SK-N-SH (cell line): ENCODE measurements at regions of chr9 and their contacts with region 1.

Region 1: GRCh38 chr9:5886114-5886939 is 4.4 kb upstream of the MLANA start:
- DNase-seq: peak; percentile 81
- H3K4me3 ChIP-seq: no peak overlapping the region; a peak in 1 of 4 replicates
- H3K27ac ChIP-seq: no peak overlapping the region
- H3K4me1 ChIP-seq: no peaks in the 10 kb centered on the region; a peak in 1 of 4 replicates
- H3K27me3 ChIP-seq: no peaks in the 10 kb centered on the region
- CTCF ChIP-seq: peak; percentile 96
- EP300 ChIP-seq: no peak
- RAD21 ChIP-seq: peak; percentile 96

Region 2: DNA sequence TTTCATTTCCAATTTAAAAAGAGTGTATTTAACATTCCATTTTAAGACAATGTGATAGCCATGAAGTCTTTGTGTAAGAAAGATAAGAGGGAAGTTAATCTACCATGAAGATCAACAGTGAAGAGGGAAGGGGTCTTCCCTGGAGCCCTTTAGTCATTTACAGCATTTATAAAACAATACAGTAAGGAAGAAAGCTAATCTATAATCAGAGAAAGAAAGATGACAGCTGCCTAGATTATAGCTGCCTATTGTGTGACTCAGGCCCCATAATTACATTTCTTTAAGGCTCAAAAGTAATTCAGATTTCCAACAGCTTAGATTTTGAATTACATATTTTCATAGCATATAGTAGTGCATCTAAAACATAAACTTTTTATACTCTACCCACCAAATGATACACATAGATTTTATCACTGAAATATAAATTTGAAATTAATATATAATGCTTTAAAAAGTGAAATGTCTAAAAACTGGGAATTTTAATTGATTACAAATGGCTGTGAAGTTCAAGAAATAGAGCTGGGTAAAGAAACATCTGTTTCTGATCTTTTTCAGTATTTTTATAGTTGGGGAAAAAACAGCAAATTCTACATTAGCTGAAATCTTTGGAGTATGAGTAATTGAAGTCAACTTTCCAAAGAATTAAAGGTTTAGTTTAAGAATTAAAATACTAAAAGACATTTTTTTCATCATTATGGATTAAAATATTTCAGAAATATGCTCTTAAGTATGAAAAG is 167.9 kb before region 1 on chr9:
- CTCF ChIA-PET with region 1: no interaction called
- POLR2A ChIA-PET with region 1: no interaction called
- DNase-seq: no peak
- H3K4me3 ChIP-seq: no peak overlapping the region
- H3K27ac ChIP-seq: peak overlapping the region; percentile 85 to 89; a peak in 3 of 4 replicates
- H3K4me1 ChIP-seq: peaks cover 6 to 13% of the 10 kb centered on the region in 2 experiments
- H3K27me3 ChIP-seq: no peaks in the 10 kb centered on the region
- CTCF ChIP-seq: no peak
- EP300 ChIP-seq: peak in 1 of 2 experiments; percentile 75; a peak in 2 of 4 replicates
- RAD21 ChIP-seq: no peak

Region 3: DNA sequence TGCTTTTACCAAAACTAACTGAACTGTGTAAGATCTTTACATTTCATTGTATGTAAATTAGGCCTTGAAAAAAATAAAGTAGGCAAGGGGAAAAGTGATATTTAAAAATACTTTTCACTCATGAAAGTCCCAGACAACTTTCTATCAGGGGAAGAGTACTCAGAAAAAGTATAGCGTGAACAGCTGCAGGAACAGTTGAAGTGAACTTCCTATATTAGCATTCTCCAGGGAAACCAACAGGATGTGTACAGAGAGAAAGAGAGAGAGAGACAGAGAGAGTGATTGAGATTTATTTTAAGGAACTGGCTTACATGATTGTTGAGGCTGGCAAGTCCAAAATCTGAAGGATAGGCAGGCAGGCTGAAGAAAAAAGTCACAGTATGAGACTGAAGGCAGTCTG is 95.4 kb before region 1 on chr9:
- CTCF ChIA-PET with region 1: no interaction called
- POLR2A ChIA-PET with region 1: no interaction called
- DNase-seq: no peak
- H3K4me3 ChIP-seq: no peak overlapping the region
- H3K27ac ChIP-seq: no peak overlapping the region
- H3K4me1 ChIP-seq: no peaks in the 10 kb centered on the region
- H3K27me3 ChIP-seq: no peaks in the 10 kb centered on the region
- CTCF ChIP-seq: no peak
- EP300 ChIP-seq: no peak
- RAD21 ChIP-seq: no peak

Region 4: GRCh38 chr9:5832543-5833529 is 53.5 kb before region 1 on chr9 and contains the start of gene ERMP1:
- CTCF ChIA-PET with region 1: interaction called, 22 read pairs
- POLR2A ChIA-PET with region 1: no interaction called
- DNase-seq: peak; percentile 92
- H3K4me3 ChIP-seq: peak within 1 kb of the TSS; percentile 76 to 89
- H3K27ac ChIP-seq: peak within 1 kb of the TSS in 1 of 2 experiments; percentile 41; a peak in 1 of 4 replicates
- H3K4me1 ChIP-seq: peaks cover 0 to 9% of the 10 kb centered on the region in 2 experiments; a peak in 3 of 4 replicates
- H3K27me3 ChIP-seq: no peaks in the 10 kb centered on the region
- CTCF ChIP-seq: peak; percentile 85
- EP300 ChIP-seq: peak in 1 of 2 experiments; percentile 72; a peak in 1 of 4 replicates
- RAD21 ChIP-seq: peak; percentile 48
- polyA plus RNA-seq, gene ERMP1: 5.9 and 6.4 TPM in 2 replicates

Region 5: GRCh38 chr9:5843794-5844504 is 42.4 kb before region 1 on chr9:
- CTCF ChIA-PET with region 1: no interaction called
- POLR2A ChIA-PET with region 1: no interaction called
- DNase-seq: peak; percentile 26
- H3K4me3 ChIP-seq: no peak overlapping the region
- H3K27ac ChIP-seq: peak overlapping the region in 1 of 2 experiments; percentile 51; a peak in 1 of 4 replicates
- H3K4me1 ChIP-seq: peaks cover 7 to 9% of the 10 kb centered on the region in 2 experiments; a peak in 2 of 4 replicates
- H3K27me3 ChIP-seq: no peaks in the 10 kb centered on the region
- CTCF ChIP-seq: no peak
- EP300 ChIP-seq: no peak
- RAD21 ChIP-seq: no peak

Region 6: GRCh38 chr9:5869315-5870019 is 16.9 kb before region 1 on chr9:
- CTCF ChIA-PET with region 1: interaction called, 20 read pairs
- POLR2A ChIA-PET with region 1: no interaction called
- DNase-seq: no peak
- H3K4me3 ChIP-seq: no peak overlapping the region
- H3K27ac ChIP-seq: no peak overlapping the region
- H3K4me1 ChIP-seq: no peaks in the 10 kb centered on the region
- H3K27me3 ChIP-seq: no peaks in the 10 kb centered on the region
- CTCF ChIP-seq: peak; percentile 31; the same call in 1 of the 2 replicates
- EP300 ChIP-seq: no peak
- RAD21 ChIP-seq: no peak

Region 7: GRCh38 chr9:5899292-5899691 is 13.0 kb after region 1 on chr9:
- CTCF ChIA-PET with region 1: interaction called, 43 read pairs
- POLR2A ChIA-PET with region 1: no interaction called
- DNase-seq: no peak
- H3K4me3 ChIP-seq: no peak overlapping the region
- H3K27ac ChIP-seq: no peak overlapping the region
- H3K4me1 ChIP-seq: no peaks in the 10 kb centered on the region
- H3K27me3 ChIP-seq: no peaks in the 10 kb centered on the region
- CTCF ChIP-seq: peak; percentile 36
- EP300 ChIP-seq: no peak
- RAD21 ChIP-seq: no peak

Region 8: DNA sequence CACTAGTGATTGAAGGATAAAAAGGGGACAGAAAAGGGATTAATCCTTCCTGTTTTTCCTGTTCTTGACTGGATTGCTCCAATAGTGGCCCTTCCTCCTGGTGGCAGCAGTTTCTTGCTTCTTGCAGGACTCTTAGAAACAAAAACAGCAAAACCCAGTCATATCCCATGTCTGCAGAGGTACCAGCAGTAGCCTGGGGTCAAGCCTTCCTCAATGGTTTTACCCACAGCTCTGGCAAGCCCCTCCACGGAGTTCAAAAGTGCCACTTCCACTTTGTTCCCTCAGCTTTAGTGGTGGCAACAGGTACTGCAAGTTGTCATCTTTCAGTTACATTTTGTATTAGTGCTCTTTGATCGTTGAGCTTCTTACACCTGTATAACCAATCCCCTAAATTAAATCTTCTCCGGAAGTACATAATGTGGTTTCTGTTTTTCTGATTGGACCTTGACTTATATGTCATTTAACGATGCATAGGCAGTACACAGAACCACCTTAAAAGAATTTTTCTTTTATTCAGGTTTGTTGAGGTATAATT is 137.8 kb after region 1 on chr9:
- CTCF ChIA-PET with region 1: interaction called, 16 read pairs
- POLR2A ChIA-PET with region 1: no interaction called
- DNase-seq: peak; percentile 28
- H3K4me3 ChIP-seq: 0 out of 4 replicates have a peak overlapping the region, but pooled peaks have one; percentile 7 to 40
- H3K27ac ChIP-seq: no peak overlapping the region
- H3K4me1 ChIP-seq: no peaks in the 10 kb centered on the region; a peak in 1 of 4 replicates
- H3K27me3 ChIP-seq: no peaks in the 10 kb centered on the region; the same call in 1 of the 2 replicates
- CTCF ChIP-seq: peak; percentile 60
- EP300 ChIP-seq: no peak
- RAD21 ChIP-seq: no peak

Region 9: DNA sequence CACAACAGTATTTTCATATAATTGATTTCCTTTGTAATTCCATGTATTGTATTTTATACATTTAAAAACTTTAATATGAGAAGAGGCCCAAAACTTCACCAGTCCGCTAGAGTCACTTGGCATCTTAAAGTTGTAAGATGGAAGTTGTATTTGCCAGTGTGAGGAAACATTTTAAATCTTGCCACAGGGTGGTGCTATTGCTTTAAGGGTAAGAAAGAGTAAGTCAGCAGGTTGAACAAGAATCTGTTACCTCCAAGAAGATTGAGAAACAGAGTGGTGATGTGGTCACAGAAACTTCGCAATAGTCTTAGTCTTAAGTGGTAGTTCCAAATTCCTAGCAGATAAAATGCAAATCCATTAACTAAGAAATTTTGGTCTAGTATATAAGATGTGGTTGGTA is 168.9 kb after region 1 on chr9:
- CTCF ChIA-PET with region 1: interaction called, 67 read pairs
- POLR2A ChIA-PET with region 1: no interaction called
- DNase-seq: no peak
- H3K4me3 ChIP-seq: no peak overlapping the region
- H3K27ac ChIP-seq: no peak overlapping the region
- H3K4me1 ChIP-seq: no peaks in the 10 kb centered on the region
- H3K27me3 ChIP-seq: no peaks in the 10 kb centered on the region
- CTCF ChIP-seq: peak; percentile 69
- EP300 ChIP-seq: no peak
- RAD21 ChIP-seq: peak; percentile 73

Region 10: GRCh38 chr9:6305954-6306563 is 419.7 kb after region 1 on chr9:
- CTCF ChIA-PET with region 1: interaction called, 61 read pairs
- POLR2A ChIA-PET with region 1: no interaction called
- DNase-seq: peak; percentile 31
- H3K4me3 ChIP-seq: no peak overlapping the region
- H3K27ac ChIP-seq: no peak overlapping the region
- H3K4me1 ChIP-seq: no peaks in the 10 kb centered on the region
- H3K27me3 ChIP-seq: no peaks in the 10 kb centered on the region; the same call in 1 of the 2 replicates
- CTCF ChIP-seq: peak; percentile 66
- EP300 ChIP-seq: no peak
- RAD21 ChIP-seq: peak; percentile 82